ENCODE measurements at regions of chr1 and their contacts with region 1.

Region 1: GRCh38 chr1:5915587-5916571 is 76.3 kb downstream of the NPHP4 start:
- DNase-seq: no peak
- ATAC-seq: peak; percentile 60
- H3K4me3 Mint-ChIP-seq: no peak overlapping the region
- H3K27ac Mint-ChIP-seq: peak overlapping the region; percentile 80
- H3K4me1 Mint-ChIP-seq: peaks cover 6% of the 10 kb centered on the region; the same call in 1 of the 2 replicates
- H3K27me3 Mint-ChIP-seq: no peaks in the 10 kb centered on the region
- CTCF ChIP-seq: 0 out of 2 replicates have a peak, but pooled peaks have one; percentile 15

Region 2: DNA sequence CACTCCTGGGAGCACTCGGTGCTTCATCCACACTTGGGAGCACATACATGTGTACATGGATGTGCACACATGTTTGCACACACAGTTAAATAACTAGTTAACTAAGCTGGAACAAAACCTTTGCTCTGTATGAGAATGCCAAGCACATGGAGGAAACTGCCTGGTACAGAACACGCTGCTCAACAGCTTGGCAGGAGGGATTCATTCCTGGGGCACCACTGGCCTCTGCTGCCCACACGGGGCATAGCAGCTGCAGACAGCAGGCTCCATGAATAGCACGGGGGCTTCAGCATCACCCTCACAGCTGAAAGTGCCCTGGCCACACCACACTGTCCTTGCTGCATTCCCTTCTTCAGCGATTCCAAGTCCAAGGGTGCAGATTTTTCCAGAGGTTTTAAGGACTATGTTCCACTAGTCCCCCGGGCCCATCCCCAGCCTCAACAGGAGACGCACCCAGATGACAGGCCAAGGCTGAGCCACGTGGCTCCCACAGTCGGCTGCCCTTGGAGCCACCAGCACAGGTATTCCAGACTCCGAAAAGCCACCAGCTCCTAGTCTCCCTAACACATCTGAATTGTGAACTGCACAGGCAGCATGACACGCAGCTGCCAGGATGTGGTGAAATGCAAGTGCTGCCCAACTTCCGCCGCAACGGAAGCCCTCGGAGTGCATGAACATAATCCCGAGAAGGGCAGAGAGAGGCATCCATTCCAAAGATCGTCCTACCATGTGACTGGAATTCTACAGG is 59.4 kb after region 1 on chr1:
- CTCF ChIA-PET with region 1: interaction called, 12 read pairs
- POLR2A ChIA-PET with region 1: no interaction called
- DNase-seq: peak; percentile 63
- ATAC-seq: peak; percentile 87
- H3K4me3 Mint-ChIP-seq: no peak overlapping the region
- H3K27ac Mint-ChIP-seq: no peak overlapping the region
- H3K4me1 Mint-ChIP-seq: peaks cover 12% of the 10 kb centered on the region
- H3K27me3 Mint-ChIP-seq: no peaks in the 10 kb centered on the region
- CTCF ChIP-seq: peak; percentile 50; the same call in 1 of the 2 replicates

Region 3: GRCh38 chr1:6007318-6008083 is 91.6 kb after region 1 on chr1:
- CTCF ChIA-PET with region 1: no interaction called
- POLR2A ChIA-PET with region 1: no interaction called
- DNase-seq: peak; percentile 5
- ATAC-seq: no peak
- H3K4me3 Mint-ChIP-seq: no peak overlapping the region
- H3K27ac Mint-ChIP-seq: no peak overlapping the region
- H3K4me1 Mint-ChIP-seq: peaks cover 11% of the 10 kb centered on the region
- H3K27me3 Mint-ChIP-seq: no peaks in the 10 kb centered on the region; the same call in 1 of the 2 replicates
- CTCF ChIP-seq: no peak

Region 4: GRCh38 chr1:6082430-6082971 is 166.6 kb after region 1 on chr1:
- CTCF ChIA-PET with region 1: no interaction called
- POLR2A ChIA-PET with region 1: no interaction called
- DNase-seq: no peak
- ATAC-seq: peak; percentile 58
- H3K4me3 Mint-ChIP-seq: no peak overlapping the region
- H3K27ac Mint-ChIP-seq: no peak overlapping the region
- H3K4me1 Mint-ChIP-seq: peaks cover 5% of the 10 kb centered on the region; the same call in 1 of the 2 replicates
- H3K27me3 Mint-ChIP-seq: no peaks in the 10 kb centered on the region
- CTCF ChIP-seq: no peak

Region 5: GRCh38 chr1:6108937-6109614 is 193.2 kb after region 1 on chr1:
- CTCF ChIA-PET with region 1: no interaction called
- POLR2A ChIA-PET with region 1: no interaction called
- DNase-seq: peak; percentile 62
- ATAC-seq: peak; percentile 73
- H3K4me3 Mint-ChIP-seq: no peak overlapping the region
- H3K27ac Mint-ChIP-seq: no peak overlapping the region
- H3K4me1 Mint-ChIP-seq: no peaks in the 10 kb centered on the region
- H3K27me3 Mint-ChIP-seq: no peaks in the 10 kb centered on the region
- CTCF ChIP-seq: peak; percentile 31; the same call in 1 of the 2 replicates

Measured in WTC11 (cell line).